Sciatic nerve (tissue), 2 donors: ENCODE measurements at regions of chr12 and their contacts with region 1.

Region 1: DNA sequence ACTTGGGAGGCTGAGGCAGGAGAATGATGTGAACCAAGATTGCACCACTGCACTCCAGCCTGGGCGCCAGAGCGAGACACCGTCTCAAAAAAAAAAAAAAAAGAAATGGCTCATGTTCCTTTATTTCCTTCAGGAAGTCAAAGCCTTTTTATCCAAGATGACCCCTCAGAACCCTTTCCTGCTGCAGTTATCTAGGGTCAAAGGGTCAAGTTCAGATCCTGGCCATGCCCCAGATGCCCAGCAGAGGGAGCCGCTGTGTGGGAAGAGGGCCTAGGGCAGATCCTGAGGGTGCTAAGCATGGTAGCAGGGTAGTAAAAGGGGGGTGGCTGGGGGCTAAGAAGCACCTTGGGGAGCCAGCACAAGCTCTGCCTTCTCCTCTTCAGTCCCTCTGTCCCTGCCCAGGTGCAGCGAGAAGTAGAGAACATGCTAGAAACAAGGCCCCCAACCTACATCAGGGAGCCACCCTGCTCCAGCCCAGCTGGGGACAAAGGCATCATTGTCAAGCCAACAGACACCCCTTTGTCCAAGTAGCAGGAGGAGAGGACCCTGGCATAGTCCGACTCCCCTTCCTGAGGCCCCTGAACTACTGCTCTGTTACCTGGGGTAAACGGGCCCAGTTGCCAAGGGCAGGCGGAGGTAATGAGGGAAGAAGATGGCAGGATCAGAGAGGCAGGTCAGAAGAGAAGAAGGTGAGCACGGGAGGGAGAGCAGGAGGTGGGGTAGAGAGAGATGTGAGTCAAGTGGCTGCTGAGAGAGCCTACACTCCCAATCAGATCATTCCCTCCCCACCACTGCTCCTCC is 6.5 kb downstream of the NFE2 start:
- DNase-seq: peak; percentile 70
- ATAC-seq: peak; percentile 71

Region 2: GRCh38 chr12:53995378-53996239 is 298.7 kb before region 1 on chr12:
- intact Hi-C with region 1: no loop called
- DNase-seq: no peak
- ATAC-seq: peak; percentile 81

Region 3: GRCh38 chr12:54341378-54342300 is 47.3 kb after region 1 on chr12:
- intact Hi-C with region 1: loop called (anchors 10 kb)
- DNase-seq: no peak
- ATAC-seq: no peak